ENCODE measurements at regions of chr5 and their contacts with region 1.

Region 1: GRCh38 chr5:96687812-96688453 is 25.8 kb downstream of the CAST start:
- DNase-seq: peak; percentile 72 to 79
- ATAC-seq: peak; percentile 88 to 95
- H3K4me3 ChIP-seq: peak overlapping the region; percentile 11; the same call in 1 of the 3 replicates
- H3K27ac ChIP-seq: peak overlapping the region in 1 of 2 experiments; percentile 47; a peak in 1 of 6 replicates
- H3K4me1 ChIP-seq: peaks cover 44% of the 10 kb centered on the region; the same call in 2 of the 3 replicates
- CTCF ChIP-seq: peak; percentile 79
- EP300 ChIP-seq: no peak
- POLR2A ChIP-seq: no peak
- RAD21 ChIP-seq: peak; percentile 85 to 88

Region 2: GRCh38 chr5:96483878-96484277 is 204.1 kb before region 1 on chr5:
- CTCF ChIA-PET with region 1: no interaction called
- POLR2A ChIA-PET with region 1: no interaction called
- DNase-seq: peak in 1 of 2 experiments; percentile 42
- ATAC-seq: peak; percentile 50 to 73; a peak in 4 of 6 replicates
- H3K4me3 ChIP-seq: no peak overlapping the region
- H3K27ac ChIP-seq: no peak overlapping the region
- H3K4me1 ChIP-seq: peaks cover 10% of the 10 kb centered on the region; the same call in 1 of the 3 replicates
- CTCF ChIP-seq: no peak
- EP300 ChIP-seq: no peak
- POLR2A ChIP-seq: no peak
- RAD21 ChIP-seq: no peak

Region 3: DNA sequence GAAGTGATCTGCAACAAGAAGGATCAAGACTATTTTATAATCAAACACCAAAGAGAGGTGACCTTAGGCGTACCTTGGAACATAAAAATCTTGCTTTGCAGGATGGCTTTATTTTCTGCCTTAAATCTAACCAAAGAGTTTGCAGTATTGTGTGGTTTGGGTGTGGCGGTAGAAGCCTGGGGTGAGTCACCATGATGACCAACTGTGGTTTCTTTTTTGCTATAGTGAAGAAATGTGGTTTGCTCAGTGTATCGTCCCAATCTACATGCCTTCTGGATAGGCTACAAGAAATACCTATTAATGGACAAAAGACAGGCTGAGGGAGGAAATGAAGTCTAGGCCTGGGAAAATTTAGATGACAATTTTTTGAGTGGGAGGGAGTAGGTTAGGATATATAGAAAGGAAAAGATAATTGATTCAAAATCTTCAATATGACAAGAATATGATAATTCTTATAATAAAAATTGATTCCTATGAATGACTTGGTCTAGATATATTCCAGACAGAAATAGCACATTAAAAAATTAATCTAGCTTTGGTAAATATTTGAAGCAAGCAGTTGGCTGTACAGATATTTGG is 30.8 kb before region 1 on chr5:
- CTCF ChIA-PET with region 1: interaction called, 15 read pairs
- POLR2A ChIA-PET with region 1: interaction called, 5 read pairs
- DNase-seq: peak; percentile 64 to 70
- ATAC-seq: peak; percentile 34 to 46; a peak in 3 of 6 replicates
- H3K4me3 ChIP-seq: no peak overlapping the region
- H3K27ac ChIP-seq: peak overlapping the region; percentile 52 to 83
- H3K4me1 ChIP-seq: peaks cover 74% of the 10 kb centered on the region
- CTCF ChIP-seq: no peak
- EP300 ChIP-seq: no peak
- POLR2A ChIP-seq: no peak
- RAD21 ChIP-seq: no peak

Region 4: DNA sequence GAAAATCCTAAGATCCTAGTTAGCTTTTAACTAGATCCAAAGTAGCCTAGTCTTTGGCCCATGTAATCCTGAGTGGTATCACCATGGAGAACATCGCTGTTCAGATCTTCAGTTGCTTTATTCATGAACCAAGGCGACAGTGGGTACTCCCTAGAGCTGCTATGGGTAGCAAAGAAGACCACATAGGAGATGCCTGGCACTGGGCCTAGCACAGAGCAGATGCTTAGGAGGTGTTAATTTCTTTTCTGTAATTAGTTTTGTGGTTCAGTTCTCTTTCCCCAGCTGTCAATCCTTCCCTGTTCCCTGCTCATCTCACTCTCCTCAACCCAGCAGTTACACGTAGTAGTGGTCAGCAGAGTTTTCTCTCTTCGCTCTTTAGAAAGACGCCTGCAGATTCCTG is 16.5 kb before region 1 on chr5:
- CTCF ChIA-PET with region 1: interaction called, 10 read pairs
- POLR2A ChIA-PET with region 1: no interaction called
- DNase-seq: no peak
- ATAC-seq: peak in 1 of 2 experiments; percentile 35; a peak in 1 of 6 replicates
- H3K4me3 ChIP-seq: no peak overlapping the region
- H3K27ac ChIP-seq: no peak overlapping the region
- H3K4me1 ChIP-seq: peaks cover 26% of the 10 kb centered on the region
- CTCF ChIP-seq: no peak
- EP300 ChIP-seq: no peak
- POLR2A ChIP-seq: no peak
- RAD21 ChIP-seq: no peak

Region 5: GRCh38 chr5:96702503-96703383 is 14.8 kb after region 1 on chr5:
- CTCF ChIA-PET with region 1: interaction called, 45 read pairs
- POLR2A ChIA-PET with region 1: no interaction called
- DNase-seq: peak; percentile 81 to 94
- ATAC-seq: peak; percentile 95 to 98
- H3K4me3 ChIP-seq: peak overlapping the region; percentile 45
- H3K27ac ChIP-seq: peak overlapping the region; percentile 56 to 81
- H3K4me1 ChIP-seq: peaks cover 47% of the 10 kb centered on the region
- CTCF ChIP-seq: no peak
- EP300 ChIP-seq: no peak
- POLR2A ChIP-seq: no peak
- RAD21 ChIP-seq: no peak

Region 6: GRCh38 chr5:96855031-96855872 is 167.3 kb after region 1 on chr5:
- CTCF ChIA-PET with region 1: no interaction called
- POLR2A ChIA-PET with region 1: no interaction called
- DNase-seq: no peak
- ATAC-seq: no peak
- H3K4me3 ChIP-seq: no peak overlapping the region
- H3K27ac ChIP-seq: no peak overlapping the region
- H3K4me1 ChIP-seq: 0 out of 3 replicates have a peak, but pooled peaks cover 4% of the 10 kb centered on the region
- CTCF ChIP-seq: no peak
- EP300 ChIP-seq: no peak
- POLR2A ChIP-seq: no peak
- RAD21 ChIP-seq: no peak

Region 7: GRCh38 chr5:97151370-97151769 is 463.4 kb after region 1 on chr5:
- CTCF ChIA-PET with region 1: no interaction called
- POLR2A ChIA-PET with region 1: no interaction called
- DNase-seq: no peak
- ATAC-seq: no peak
- H3K4me3 ChIP-seq: no peak overlapping the region
- H3K27ac ChIP-seq: no peak overlapping the region
- H3K4me1 ChIP-seq: no peaks in the 10 kb centered on the region
- CTCF ChIP-seq: no peak
- EP300 ChIP-seq: no peak
- POLR2A ChIP-seq: no peak
- RAD21 ChIP-seq: no peak